Activated B cell treated with CpG ODN at 0.5 μM for 24 hours (primary cell): ENCODE measurements at regions of chr11 and their contacts with region 1.

Region 1: GRCh38 chr11:83249972-83250593 is 36.1 kb downstream of the CCDC90B start:
- DNase-seq: no peak
- ATAC-seq: peak; percentile 75
- H3K4me3 Mint-ChIP-seq: no peak overlapping the region
- H3K27ac Mint-ChIP-seq: no peak overlapping the region
- H3K4me1 Mint-ChIP-seq: peaks cover 13% of the 10 kb centered on the region
- H3K27me3 Mint-ChIP-seq: no peaks in the 10 kb centered on the region
- CTCF ChIP-seq: peak; percentile 90

Region 2: DNA sequence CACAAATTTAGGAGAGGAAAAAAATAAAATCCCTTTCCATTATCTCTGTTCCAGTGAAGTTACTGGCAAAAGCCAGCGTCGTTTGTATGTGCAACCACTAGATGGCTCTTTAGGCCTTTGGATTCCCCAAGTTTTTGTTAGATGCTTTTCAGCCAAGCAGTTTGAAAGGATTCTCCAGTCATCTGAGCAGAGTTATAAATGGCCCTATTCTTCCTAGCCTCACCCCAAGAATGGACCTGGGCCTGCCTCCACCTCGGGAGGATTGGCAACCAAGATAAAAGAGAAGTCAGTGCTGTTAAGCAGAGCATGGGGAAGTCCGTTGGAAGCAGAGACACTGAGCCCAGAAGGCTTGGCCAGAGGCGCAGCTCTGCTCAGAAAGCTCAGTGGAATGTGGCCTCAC is 531.8 kb before region 1 on chr11:
- CTCF ChIA-PET with region 1: interaction called, 5 read pairs
- POLR2A ChIA-PET with region 1: no interaction called
- intact Hi-C with region 1: loop called (anchors 2 kb)
- DNase-seq: no peak
- ATAC-seq: no peak
- H3K4me3 Mint-ChIP-seq: no peak overlapping the region
- H3K27ac Mint-ChIP-seq: no peak overlapping the region
- H3K4me1 Mint-ChIP-seq: no peaks in the 10 kb centered on the region
- H3K27me3 Mint-ChIP-seq: peaks cover 6% of the 10 kb centered on the region
- CTCF ChIP-seq: peak; percentile 36

Region 3: DNA sequence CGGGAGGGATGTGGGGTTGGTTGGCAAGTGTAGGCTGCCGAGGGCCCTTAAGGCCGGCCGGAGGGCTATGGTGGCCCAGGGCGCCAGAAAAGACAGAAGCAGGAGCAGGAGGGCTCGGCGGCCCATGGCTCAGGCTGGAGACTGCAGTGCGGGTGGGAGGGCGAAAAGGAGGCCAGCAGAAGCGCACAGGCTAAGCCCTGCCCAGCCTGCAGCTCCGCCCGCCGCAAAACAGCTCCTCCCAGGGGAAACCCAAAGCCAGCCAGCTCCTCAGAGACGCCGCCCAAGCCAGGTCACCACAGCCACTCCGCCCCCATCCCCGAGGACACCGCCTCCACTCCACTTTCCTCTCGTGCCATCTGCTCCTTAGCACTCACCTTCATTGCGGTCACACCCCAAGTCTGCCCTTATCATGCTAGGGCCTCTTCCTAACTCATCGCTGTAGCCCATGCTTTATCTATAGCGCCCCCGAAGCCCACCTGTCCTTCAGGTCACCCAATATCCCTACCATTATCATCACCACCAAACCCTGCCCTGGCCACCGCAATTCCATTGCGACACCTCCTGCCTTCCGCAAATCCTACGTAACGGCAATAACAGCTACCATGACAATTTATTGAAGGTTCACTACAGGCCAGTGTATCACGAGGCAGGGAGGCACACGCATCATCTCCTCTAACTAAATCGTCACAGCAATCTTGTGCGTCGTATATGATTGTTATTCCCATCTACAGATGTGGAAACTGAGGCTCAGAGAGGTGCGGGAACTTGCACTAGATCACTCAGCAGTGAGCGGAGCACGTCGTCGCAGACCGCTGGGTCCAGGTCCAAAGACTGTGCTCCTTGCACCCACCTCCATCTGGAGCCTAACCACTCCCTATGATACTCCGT is 349.6 kb before region 1 on chr11 and contains the start of gene PRCP:
- CTCF ChIA-PET with region 1: interaction called, 29 read pairs
- POLR2A ChIA-PET with region 1: interaction called, 4 read pairs
- intact Hi-C with region 1: no loop called
- DNase-seq: peak; percentile 78
- ATAC-seq: peak; percentile 75
- H3K4me3 Mint-ChIP-seq: peak within 1 kb of the TSS; percentile 100
- H3K27ac Mint-ChIP-seq: peak within 1 kb of the TSS; percentile 99
- H3K4me1 Mint-ChIP-seq: peaks cover 57% of the 10 kb centered on the region
- H3K27me3 Mint-ChIP-seq: no peaks in the 10 kb centered on the region
- CTCF ChIP-seq: no peak
- total RNA-seq, gene PRCP: 29.8 and 34.8 TPM in 2 replicates

Region 4: DNA sequence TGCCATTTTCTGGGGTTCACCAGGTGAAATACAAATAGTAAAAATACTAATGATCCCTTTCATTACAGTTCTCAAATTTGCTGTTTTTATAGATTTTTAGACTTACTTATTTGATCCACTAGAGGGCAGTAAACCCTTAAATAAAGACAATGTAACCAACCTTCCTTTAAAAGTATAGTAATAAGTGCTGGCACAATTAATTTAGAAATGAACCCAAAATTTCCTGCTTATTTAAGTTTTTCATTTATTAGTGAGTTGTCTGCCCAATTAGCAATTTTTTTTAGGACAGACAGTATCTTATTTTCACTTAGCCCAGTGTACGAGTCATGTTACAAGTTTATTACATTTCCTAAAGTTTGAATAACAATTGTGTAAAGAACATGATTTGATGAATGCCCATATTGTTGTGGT is 343.8 kb before region 1 on chr11:
- CTCF ChIA-PET with region 1: interaction called, 30 read pairs
- POLR2A ChIA-PET with region 1: no interaction called
- intact Hi-C with region 1: loop called (anchors 1 kb)
- DNase-seq: no peak
- ATAC-seq: no peak
- H3K4me3 Mint-ChIP-seq: no peak overlapping the region
- H3K27ac Mint-ChIP-seq: peak overlapping the region; percentile 38
- H3K4me1 Mint-ChIP-seq: peaks cover 44% of the 10 kb centered on the region
- H3K27me3 Mint-ChIP-seq: no peaks in the 10 kb centered on the region
- CTCF ChIP-seq: peak; percentile 35

Region 5: GRCh38 chr11:83087035-83087434 is 163.0 kb before region 1 on chr11:
- CTCF ChIA-PET with region 1: interaction called, 12 read pairs
- POLR2A ChIA-PET with region 1: no interaction called
- intact Hi-C with region 1: loop called (anchors 5 kb)
- DNase-seq: no peak
- ATAC-seq: no peak
- H3K4me3 Mint-ChIP-seq: no peak overlapping the region
- H3K27ac Mint-ChIP-seq: no peak overlapping the region
- H3K4me1 Mint-ChIP-seq: peaks cover 19% of the 10 kb centered on the region
- H3K27me3 Mint-ChIP-seq: no peaks in the 10 kb centered on the region
- CTCF ChIP-seq: no peak

Region 6: GRCh38 chr11:83162377-83162776 is 87.7 kb before region 1 on chr11:
- CTCF ChIA-PET with region 1: interaction called, 10 read pairs
- POLR2A ChIA-PET with region 1: no interaction called
- intact Hi-C with region 1: no loop called
- DNase-seq: no peak
- ATAC-seq: peak; percentile 41
- H3K4me3 Mint-ChIP-seq: peak overlapping the region; percentile 64
- H3K27ac Mint-ChIP-seq: peak overlapping the region; percentile 56
- H3K4me1 Mint-ChIP-seq: peaks cover 61% of the 10 kb centered on the region
- H3K27me3 Mint-ChIP-seq: no peaks in the 10 kb centered on the region
- CTCF ChIP-seq: no peak

Region 7: DNA sequence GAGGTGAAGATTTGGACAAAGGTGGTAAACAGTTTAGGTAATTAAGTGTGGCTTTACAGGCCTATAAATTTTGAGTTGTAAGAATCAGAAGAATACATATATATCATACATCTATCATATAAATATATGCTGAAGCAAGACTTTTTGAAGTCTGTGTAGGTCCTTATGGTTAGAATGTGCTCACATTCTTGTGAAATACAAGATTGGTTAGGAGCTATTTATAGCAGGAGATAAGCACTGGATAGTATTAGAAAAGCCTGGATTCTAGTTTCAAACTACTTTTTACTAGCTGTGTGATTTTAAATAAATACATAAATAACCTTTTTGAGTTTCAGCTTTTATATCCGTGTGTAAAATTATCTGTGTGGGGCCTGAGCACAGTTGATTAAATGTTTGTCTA is 14.3 kb before region 1 on chr11:
- CTCF ChIA-PET with region 1: interaction called, 13 read pairs
- POLR2A ChIA-PET with region 1: no interaction called
- intact Hi-C with region 1: no loop called
- DNase-seq: no peak
- ATAC-seq: no peak
- H3K4me3 Mint-ChIP-seq: no peak overlapping the region
- H3K27ac Mint-ChIP-seq: no peak overlapping the region
- H3K4me1 Mint-ChIP-seq: no peaks in the 10 kb centered on the region
- H3K27me3 Mint-ChIP-seq: no peaks in the 10 kb centered on the region
- CTCF ChIP-seq: no peak